Activated CD8-positive, alpha-beta memory T cell treated with anti-CD3 and anti-CD28 coated beads, Interleukin-2, amount 10 ng/mL, durations not matched to agents 7 days and 5 days (primary cell): ENCODE measurements at regions of chr2 and their contacts with region 1.

Region 1: DNA sequence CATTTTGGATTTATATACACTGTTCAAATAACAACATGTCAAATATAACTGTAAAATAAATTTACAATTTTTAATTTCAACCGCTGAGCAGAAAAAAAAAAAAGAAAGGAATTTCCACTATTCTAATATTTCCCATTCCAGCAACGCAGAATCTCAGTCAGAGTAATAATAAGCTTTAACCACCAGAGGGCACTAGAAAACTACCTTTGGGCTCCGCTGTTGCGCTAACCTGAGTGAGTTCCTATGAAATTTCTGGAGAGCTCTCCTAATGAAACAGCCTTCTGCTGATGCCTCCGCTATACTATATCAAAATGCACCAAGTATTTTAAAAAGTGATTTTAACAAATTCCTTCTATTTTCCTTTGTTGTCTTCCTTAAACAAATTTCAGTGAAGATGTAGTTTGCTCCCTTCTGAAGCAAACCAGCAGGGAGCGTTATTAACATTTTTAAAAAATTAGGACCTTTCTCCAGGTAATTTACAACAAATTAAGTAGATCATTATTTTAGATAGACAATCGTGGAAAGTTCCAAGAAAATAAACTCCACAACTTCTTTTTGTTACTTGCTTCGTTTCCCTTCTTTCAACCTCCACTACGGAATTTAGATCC is 23.0 kb downstream of the ERMN start:
- DNase-seq: no peak
- ATAC-seq: peak; percentile 76
- H3K4me3 Mint-ChIP-seq: no peak overlapping the region
- H3K27ac Mint-ChIP-seq: no peak overlapping the region
- H3K4me1 Mint-ChIP-seq: peaks cover 18% of the 10 kb centered on the region
- H3K27me3 Mint-ChIP-seq: peaks cover 6% of the 10 kb centered on the region

Region 2: GRCh38 chr2:157312866-157313486 is 10.4 kb after region 1 on chr2:
- CTCF ChIA-PET with region 1: interaction called, 33 read pairs
- DNase-seq: no peak
- ATAC-seq: no peak
- H3K4me3 Mint-ChIP-seq: no peak overlapping the region
- H3K27ac Mint-ChIP-seq: no peak overlapping the region
- H3K4me1 Mint-ChIP-seq: peaks cover 17% of the 10 kb centered on the region
- H3K27me3 Mint-ChIP-seq: peaks cover 3% of the 10 kb centered on the region

Region 3: DNA sequence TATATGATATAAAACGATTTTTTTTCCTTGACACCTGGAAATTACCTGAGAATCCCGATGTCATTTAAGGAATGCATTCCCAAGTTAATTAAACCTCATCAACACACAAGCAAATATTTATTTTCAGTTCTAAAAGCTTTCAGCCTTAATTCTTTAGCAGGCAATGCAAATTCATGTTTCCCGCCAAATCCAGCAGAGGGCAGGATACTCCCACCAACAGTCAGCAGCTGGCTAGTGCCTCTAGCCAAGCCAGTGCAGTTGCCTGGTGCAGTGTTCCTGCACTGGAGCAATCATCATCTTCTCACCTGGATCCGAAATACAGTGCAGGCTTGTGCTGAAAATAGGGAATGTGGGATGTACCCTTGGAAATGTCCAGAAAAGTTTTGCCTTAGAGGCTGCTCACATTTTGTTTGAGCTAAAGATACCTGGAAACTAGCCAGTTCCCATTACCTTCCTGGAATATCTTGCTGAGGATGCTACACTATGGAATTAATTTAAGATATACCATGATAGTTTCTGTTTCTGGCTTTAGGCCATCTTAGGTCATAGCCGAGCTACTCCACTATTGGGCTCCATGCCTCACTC is 189.7 kb after region 1 on chr2:
- CTCF ChIA-PET with region 1: interaction called, 49 read pairs
- DNase-seq: peak; percentile 86
- ATAC-seq: peak; percentile 91
- H3K4me3 Mint-ChIP-seq: no peak overlapping the region
- H3K27ac Mint-ChIP-seq: no peak overlapping the region
- H3K4me1 Mint-ChIP-seq: peaks cover 63% of the 10 kb centered on the region
- H3K27me3 Mint-ChIP-seq: no peaks in the 10 kb centered on the region

Region 4: GRCh38 chr2:157596992-157597681 is 294.5 kb after region 1 on chr2:
- CTCF ChIA-PET with region 1: interaction called, 54 read pairs
- DNase-seq: peak; percentile 69
- ATAC-seq: peak; percentile 94
- H3K4me3 Mint-ChIP-seq: peak overlapping the region; percentile 53
- H3K27ac Mint-ChIP-seq: no peak overlapping the region
- H3K4me1 Mint-ChIP-seq: peaks cover 15% of the 10 kb centered on the region
- H3K27me3 Mint-ChIP-seq: peaks cover 20% of the 10 kb centered on the region

Region 5: GRCh38 chr2:158024288-158024898 is 721.8 kb after region 1 on chr2:
- CTCF ChIA-PET with region 1: interaction called, 14 read pairs
- DNase-seq: peak; percentile 64
- ATAC-seq: peak; percentile 75
- H3K4me3 Mint-ChIP-seq: no peak overlapping the region
- H3K27ac Mint-ChIP-seq: no peak overlapping the region
- H3K4me1 Mint-ChIP-seq: no peaks in the 10 kb centered on the region
- H3K27me3 Mint-ChIP-seq: no peaks in the 10 kb centered on the region